ENCODE measurements at regions of chr1 and their contacts with region 1.

Region 1: GRCh38 chr1:150477733-150478132 is 9.5 kb upstream of the TARS2 start:
- DNase-seq: no peak
- H3K4me3 ChIP-seq: no peak overlapping the region
- H3K27ac ChIP-seq: peak overlapping the region in 1 of 8 donors; percentile 9
- H3K4me1 ChIP-seq: peaks cover 0 to 33% (median 7%) of the 10 kb centered on the region in 6 donors
- H3K27me3 ChIP-seq: no peaks in the 10 kb centered on the region
- CTCF ChIP-seq: no peak
- POLR2A ChIP-seq: no peak

Region 2: GRCh38 chr1:150363426-150364230 is 114.1 kb before region 1 on chr1 and contains the start of gene RPRD2:
- intact Hi-C with region 1: loop called (anchors 10 kb)
- DNase-seq: peak; percentile 99
- H3K4me3 ChIP-seq: peak within 1 kb of the TSS; percentile 46 to 97 (median 72)
- H3K27ac ChIP-seq: peak within 1 kb of the TSS; percentile 74 to 99 (median 98)
- H3K4me1 ChIP-seq: peaks cover 10 to 47% (median 29%) of the 10 kb centered on the region in 6 donors
- H3K27me3 ChIP-seq: no peaks in the 10 kb centered on the region
- CTCF ChIP-seq: no peak
- POLR2A ChIP-seq: peak in 1 of 3 donors; percentile 76
- total RNA-seq, gene RPRD2: 23.8 to 42.4 (median 32.8) TPM

Region 3: GRCh38 chr1:150829743-150830142 is 352.0 kb after region 1 on chr1:
- intact Hi-C with region 1: no loop called
- DNase-seq: no peak
- H3K4me3 ChIP-seq: no peak overlapping the region
- H3K27ac ChIP-seq: no peak overlapping the region
- H3K4me1 ChIP-seq: no peaks in the 10 kb centered on the region
- H3K27me3 ChIP-seq: no peaks in the 10 kb centered on the region
- CTCF ChIP-seq: peak in 3 of 11 experiments; percentile 8 to 15 (median 12)
- POLR2A ChIP-seq: no peak